ENCODE measurements at regions of chr9 and their contacts with region 1.

Region 1: DNA sequence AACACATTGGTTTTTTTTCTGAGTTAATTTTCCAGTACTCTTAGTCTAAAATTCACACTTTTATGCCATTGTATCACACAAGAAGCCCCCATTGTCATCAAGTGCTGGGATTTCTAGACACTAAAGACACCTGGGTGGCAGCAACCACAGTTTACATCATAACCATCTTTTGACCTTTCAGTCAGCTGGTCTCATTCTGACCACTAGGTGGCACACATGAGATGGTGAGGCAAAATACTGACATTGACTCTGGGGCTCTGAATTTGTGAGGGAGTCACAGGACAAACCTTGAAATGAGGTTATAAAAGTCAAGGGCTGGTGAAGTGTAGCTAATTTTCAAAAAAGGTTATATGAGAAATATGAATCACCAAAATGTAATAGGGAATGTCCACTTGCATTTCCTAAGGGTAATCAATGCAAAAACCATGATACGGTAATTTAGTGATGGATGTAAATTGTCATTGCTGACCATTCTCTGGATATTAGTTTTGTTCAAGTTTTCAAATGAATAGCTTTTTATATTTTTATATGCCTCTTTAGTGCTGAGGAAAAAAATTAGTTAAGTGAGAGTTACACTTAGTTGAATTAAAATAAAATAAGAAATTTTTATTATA is 229.4 kb downstream of the DMAC1 start:
- DNase-seq: peak; percentile 76
- H3K4me3 Mint-ChIP-seq: no peak overlapping the region
- H3K27ac Mint-ChIP-seq: no peak overlapping the region
- H3K4me1 Mint-ChIP-seq: no peaks in the 10 kb centered on the region
- H3K27me3 Mint-ChIP-seq: peaks cover 6% of the 10 kb centered on the region

Region 2: GRCh38 chr9:7659766-7660165 is 89.6 kb after region 1 on chr9:
- CTCF ChIA-PET with region 1: interaction called, 12 read pairs
- DNase-seq: no peak
- H3K4me3 Mint-ChIP-seq: no peak overlapping the region
- H3K27ac Mint-ChIP-seq: no peak overlapping the region
- H3K4me1 Mint-ChIP-seq: no peaks in the 10 kb centered on the region
- H3K27me3 Mint-ChIP-seq: no peaks in the 10 kb centered on the region